ENCODE measurements at regions of chr17 and their contacts with region 1.

Region 1: GRCh38 chr17:38351412-38352222 is at the start of gene SOCS7:
- DNase-seq: peak; percentile 94
- ATAC-seq: peak; percentile 92
- H3K4me3 ChIP-seq: peak within 1 kb of the TSS; percentile 38 to 78 (median 70)
- H3K4me3 Mint-ChIP-seq: peak within 1 kb of the TSS; percentile 99
- H3K27ac ChIP-seq: peak within 1 kb of the TSS; percentile 71 to 73
- H3K27ac Mint-ChIP-seq: peak within 1 kb of the TSS; percentile 97
- H3K4me1 ChIP-seq: peaks cover 11 to 19% of the 10 kb centered on the region in 2 donors
- H3K4me1 Mint-ChIP-seq: peaks cover 31% of the 10 kb centered on the region
- H3K27me3 ChIP-seq: no peaks in the 10 kb centered on the region
- H3K27me3 Mint-ChIP-seq: no peaks in the 10 kb centered on the region
- CTCF ChIP-seq: no peak
- total RNA-seq, gene SOCS7: 20.8 and 23.3 TPM in 2 replicates

Region 2: DNA sequence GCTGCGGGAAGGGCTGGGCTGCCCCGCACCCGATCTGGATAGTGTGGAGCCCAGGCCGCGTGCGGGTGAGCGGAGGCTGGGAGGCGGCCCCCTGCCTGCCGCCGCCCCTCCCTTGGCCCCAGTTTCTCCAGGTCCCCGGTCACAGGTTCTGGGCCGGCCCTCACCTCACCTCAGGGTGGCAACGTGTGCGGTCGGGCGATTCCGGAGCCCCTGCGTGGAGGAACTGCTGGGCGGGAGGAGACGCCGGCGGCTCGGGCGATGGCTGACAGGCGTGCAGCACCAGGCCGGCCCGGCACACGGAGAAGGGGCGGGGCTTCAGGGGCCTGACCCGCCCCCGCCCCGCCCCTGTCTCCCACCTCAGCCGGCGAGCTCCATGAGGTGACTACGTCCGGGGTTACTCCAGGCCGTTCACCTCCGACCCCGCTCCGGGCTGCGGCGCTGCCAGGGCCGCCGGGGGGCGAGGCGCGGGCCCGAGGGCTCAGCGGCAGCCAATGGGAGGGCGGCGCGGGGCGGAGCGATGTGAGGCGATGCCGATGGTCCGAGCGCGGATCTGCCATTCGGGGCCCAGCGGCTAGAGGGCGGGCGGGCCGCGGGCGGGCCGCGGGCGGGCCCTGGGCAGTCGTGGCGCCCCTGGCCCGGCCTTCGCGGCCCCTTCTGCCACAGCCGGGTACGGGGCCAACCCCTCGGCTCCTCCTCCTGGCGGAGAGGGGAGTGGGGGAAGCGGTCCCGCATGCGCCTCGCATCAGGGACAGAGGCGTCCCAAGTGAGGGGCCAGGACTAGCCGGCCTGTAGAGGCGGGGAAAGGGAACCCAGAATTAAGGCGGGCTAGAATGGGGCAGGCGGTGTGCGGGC is 992.6 kb before region 1 on chr17:
- CTCF ChIA-PET with region 1: no interaction called
- POLR2A ChIA-PET with region 1: no interaction called
- intact Hi-C with region 1: loop called (anchors 2 kb)
- DNase-seq: peak; percentile 95
- ATAC-seq: peak; percentile 95
- H3K4me3 ChIP-seq: peak overlapping the region; percentile 18 to 88 (median 83)
- H3K4me3 Mint-ChIP-seq: peak overlapping the region; percentile 92
- H3K27ac ChIP-seq: peak overlapping the region; percentile 60 to 63
- H3K27ac Mint-ChIP-seq: peak overlapping the region; percentile 80
- H3K4me1 ChIP-seq: peaks cover 12 to 18% of the 10 kb centered on the region in 2 donors
- H3K4me1 Mint-ChIP-seq: peaks cover 14% of the 10 kb centered on the region
- H3K27me3 ChIP-seq: no peaks in the 10 kb centered on the region
- H3K27me3 Mint-ChIP-seq: no peaks in the 10 kb centered on the region
- CTCF ChIP-seq: peak; percentile 47

Region 3: DNA sequence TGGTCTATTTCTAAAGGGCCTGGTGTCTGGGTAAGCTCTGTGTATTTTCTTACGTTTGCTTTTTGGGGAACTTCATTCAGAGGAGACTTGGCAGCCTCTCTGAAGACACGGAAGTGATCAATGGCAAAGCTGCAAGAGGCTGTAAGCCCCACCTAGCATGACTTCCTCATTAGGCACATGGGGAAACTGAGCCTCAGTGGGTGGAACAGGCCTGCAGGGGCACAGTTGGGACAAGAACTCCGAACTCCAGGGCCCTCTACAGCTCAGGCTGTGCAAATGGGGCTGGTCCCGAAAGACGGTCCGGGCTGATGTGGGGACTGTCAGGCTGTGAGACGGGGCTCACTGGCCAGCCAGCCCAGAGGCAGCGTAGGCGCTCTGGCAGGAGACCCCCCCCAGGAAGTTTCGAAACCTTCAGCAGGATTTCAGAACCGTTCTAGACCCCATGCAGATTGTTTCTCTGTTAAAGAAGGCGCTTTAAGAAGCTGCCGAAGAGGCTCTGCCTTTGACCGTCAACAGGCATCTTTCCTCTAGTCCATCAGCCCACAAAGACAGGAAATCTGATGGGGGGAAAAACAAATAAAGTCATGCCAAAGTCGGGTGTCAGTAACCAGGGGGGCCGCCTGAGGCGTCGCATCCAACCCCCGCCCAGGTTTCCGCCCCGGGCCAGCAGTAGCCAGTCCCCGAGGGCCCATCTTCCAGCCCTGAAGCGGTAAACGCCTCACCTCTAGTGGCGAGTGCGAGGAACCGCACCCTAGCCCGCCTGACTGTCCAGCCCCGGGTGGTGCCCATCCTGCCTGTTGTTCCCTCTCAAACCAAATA is 507.2 kb before region 1 on chr17:
- CTCF ChIA-PET with region 1: no interaction called
- POLR2A ChIA-PET with region 1: no interaction called
- intact Hi-C with region 1: no loop called
- DNase-seq: peak; percentile 68
- ATAC-seq: peak; percentile 91
- H3K4me3 ChIP-seq: peak overlapping the region; percentile 19 to 75 (median 47)
- H3K4me3 Mint-ChIP-seq: peak overlapping the region; percentile 88
- H3K27ac ChIP-seq: peak overlapping the region; percentile 66 to 76
- H3K27ac Mint-ChIP-seq: peak overlapping the region; percentile 78
- H3K4me1 ChIP-seq: peaks cover 26 to 30% of the 10 kb centered on the region in 2 donors
- H3K4me1 Mint-ChIP-seq: peaks cover 47% of the 10 kb centered on the region
- H3K27me3 ChIP-seq: no peaks in the 10 kb centered on the region
- H3K27me3 Mint-ChIP-seq: no peaks in the 10 kb centered on the region
- CTCF ChIP-seq: peak; percentile 80

Region 4: GRCh38 chr17:38333635-38334295 is 17.9 kb before region 1 on chr17:
- CTCF ChIA-PET with region 1: interaction called, 12 read pairs
- POLR2A ChIA-PET with region 1: no interaction called
- intact Hi-C with region 1: no loop called
- DNase-seq: no peak
- ATAC-seq: no peak
- H3K4me3 ChIP-seq: no peak overlapping the region
- H3K4me3 Mint-ChIP-seq: no peak overlapping the region
- H3K27ac ChIP-seq: no peak overlapping the region
- H3K27ac Mint-ChIP-seq: no peak overlapping the region
- H3K4me1 ChIP-seq: no peaks in the 10 kb centered on the region
- H3K4me1 Mint-ChIP-seq: no peaks in the 10 kb centered on the region
- H3K27me3 ChIP-seq: peaks cover 0 to 8% (median 3%) of the 10 kb centered on the region in 4 experiments
- H3K27me3 Mint-ChIP-seq: peaks cover 22% of the 10 kb centered on the region
- CTCF ChIP-seq: peak; percentile 35

Region 5: GRCh38 chr17:38415250-38416194 is 63.9 kb after region 1 on chr17:
- CTCF ChIA-PET with region 1: interaction called, 323 read pairs
- POLR2A ChIA-PET with region 1: interaction called, 3 read pairs
- intact Hi-C with region 1: no loop called
- DNase-seq: peak; percentile 25
- ATAC-seq: no peak
- H3K4me3 ChIP-seq: no peak overlapping the region
- H3K4me3 Mint-ChIP-seq: no peak overlapping the region
- H3K27ac ChIP-seq: no peak overlapping the region
- H3K27ac Mint-ChIP-seq: no peak overlapping the region
- H3K4me1 ChIP-seq: peaks cover 8 to 10% of the 10 kb centered on the region in 2 donors
- H3K4me1 Mint-ChIP-seq: peaks cover 3% of the 10 kb centered on the region
- H3K27me3 ChIP-seq: peaks cover 0 to 43% (median 11%) of the 10 kb centered on the region in 4 experiments
- H3K27me3 Mint-ChIP-seq: peaks cover 30% of the 10 kb centered on the region
- CTCF ChIP-seq: no peak

Region 6: GRCh38 chr17:38498186-38498752 is 146.7 kb after region 1 on chr17:
- CTCF ChIA-PET with region 1: no interaction called
- POLR2A ChIA-PET with region 1: no interaction called
- intact Hi-C with region 1: loop called (anchors 2 kb)
- DNase-seq: no peak
- ATAC-seq: no peak
- H3K4me3 ChIP-seq: no peak overlapping the region
- H3K4me3 Mint-ChIP-seq: no peak overlapping the region
- H3K27ac ChIP-seq: no peak overlapping the region
- H3K27ac Mint-ChIP-seq: no peak overlapping the region
- H3K4me1 ChIP-seq: no peaks in the 10 kb centered on the region
- H3K4me1 Mint-ChIP-seq: no peaks in the 10 kb centered on the region
- H3K27me3 ChIP-seq: no peaks in the 10 kb centered on the region
- H3K27me3 Mint-ChIP-seq: peaks cover 6% of the 10 kb centered on the region
- CTCF ChIP-seq: no peak

Region 7: GRCh38 chr17:38572669-38573365 is 221.2 kb after region 1 on chr17:
- CTCF ChIA-PET with region 1: no interaction called
- POLR2A ChIA-PET with region 1: no interaction called
- intact Hi-C with region 1: no loop called
- DNase-seq: peak; percentile 53
- ATAC-seq: peak; percentile 60
- H3K4me3 ChIP-seq: peak overlapping the region in 2 of 5 experiments; percentile 31 to 39
- H3K4me3 Mint-ChIP-seq: peak overlapping the region; percentile 77
- H3K27ac ChIP-seq: no peak overlapping the region
- H3K27ac Mint-ChIP-seq: no peak overlapping the region
- H3K4me1 ChIP-seq: peaks cover 16 to 30% of the 10 kb centered on the region in 2 donors
- H3K4me1 Mint-ChIP-seq: peaks cover 19% of the 10 kb centered on the region
- H3K27me3 ChIP-seq: peaks cover 0 to 87% (median 58%) of the 10 kb centered on the region in 4 experiments
- H3K27me3 Mint-ChIP-seq: peaks cover 88% of the 10 kb centered on the region
- CTCF ChIP-seq: no peak